CD8-positive, alpha-beta T cell (primary cell): ENCODE measurements at regions of chr11 and their contacts with region 1.

Region 1: DNA sequence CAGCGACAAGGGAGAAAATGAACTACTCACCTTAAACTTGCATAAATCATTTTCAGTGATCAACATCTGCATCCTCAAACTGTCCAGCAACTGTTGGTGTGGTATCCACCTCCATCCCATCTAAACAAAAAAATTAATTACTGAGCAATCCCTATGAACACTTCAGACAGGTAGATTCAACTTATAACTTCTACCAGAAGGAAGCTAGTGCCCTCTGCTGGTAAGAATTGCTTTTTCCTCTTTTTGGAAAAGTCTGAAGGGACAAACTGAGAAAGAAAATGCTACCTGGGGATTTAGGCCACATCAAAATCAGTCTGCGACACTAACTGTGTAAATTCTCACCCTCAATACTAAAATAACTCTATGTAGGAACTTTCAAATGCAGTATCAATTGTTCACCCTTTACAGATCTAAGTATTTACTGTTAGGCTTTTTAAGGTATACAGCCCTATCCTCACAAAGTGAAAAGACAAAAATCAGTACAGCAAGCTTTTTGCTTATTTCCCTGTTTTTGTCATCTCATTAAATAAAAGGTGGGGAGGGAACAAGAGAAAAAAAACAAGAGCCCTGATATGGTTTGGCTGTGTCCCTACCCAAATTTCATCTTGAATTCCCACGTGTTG is 17.9 kb downstream of the CLNS1A start:
- DNase-seq: peak in 3 of 9 experiments; percentile 34 to 66 (median 54)
- ATAC-seq: no peak
- H3K4me3 ChIP-seq: no peak overlapping the region
- H3K4me3 Mint-ChIP-seq: no peak overlapping the region
- H3K27ac ChIP-seq: no peak overlapping the region
- H3K27ac Mint-ChIP-seq: no peak overlapping the region
- H3K4me1 ChIP-seq: no peaks in the 10 kb centered on the region
- H3K4me1 Mint-ChIP-seq: no peaks in the 10 kb centered on the region
- H3K27me3 ChIP-seq: no peaks in the 10 kb centered on the region
- H3K27me3 Mint-ChIP-seq: no peaks in the 10 kb centered on the region
- CTCF ChIP-seq: peak; percentile 77

Region 2: GRCh38 chr11:77609234-77609633 is 10.5 kb before region 1 on chr11:
- CTCF ChIA-PET with region 1: interaction called, 13 read pairs
- POLR2A ChIA-PET with region 1: no interaction called
- intact Hi-C with region 1: no loop called
- DNase-seq: no peak
- ATAC-seq: no peak
- H3K4me3 ChIP-seq: no peak overlapping the region
- H3K4me3 Mint-ChIP-seq: no peak overlapping the region
- H3K27ac ChIP-seq: no peak overlapping the region
- H3K27ac Mint-ChIP-seq: no peak overlapping the region
- H3K4me1 ChIP-seq: no peaks in the 10 kb centered on the region
- H3K4me1 Mint-ChIP-seq: no peaks in the 10 kb centered on the region
- H3K27me3 ChIP-seq: no peaks in the 10 kb centered on the region
- H3K27me3 Mint-ChIP-seq: no peaks in the 10 kb centered on the region
- CTCF ChIP-seq: no peak

Region 3: DNA sequence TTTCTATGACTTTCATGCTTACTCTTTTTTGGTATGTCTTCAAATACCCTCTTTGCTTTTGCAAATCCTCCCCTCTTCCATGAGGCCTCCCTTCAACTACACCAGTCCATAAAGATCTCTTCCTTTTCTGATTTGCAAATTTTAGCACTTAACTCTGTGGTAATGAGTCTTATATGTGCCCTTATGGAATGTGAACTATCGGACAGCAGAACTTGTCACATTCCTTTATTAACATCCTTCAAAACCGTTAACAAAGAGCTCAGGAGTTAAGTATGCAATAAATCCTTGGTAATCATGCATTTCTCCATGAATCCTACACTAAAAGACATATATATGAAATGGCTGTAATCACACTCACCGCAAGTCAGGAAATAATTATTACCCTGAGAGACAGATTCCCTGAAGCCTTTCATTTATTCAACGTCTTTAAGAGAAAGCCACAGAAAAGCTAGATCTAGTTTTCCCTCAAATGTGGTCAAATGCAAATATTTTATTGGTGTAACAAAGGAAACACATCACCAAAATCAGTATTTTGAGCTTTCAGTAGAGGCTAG is 10.5 kb after region 1 on chr11:
- CTCF ChIA-PET with region 1: interaction called, 11 read pairs
- POLR2A ChIA-PET with region 1: no interaction called
- intact Hi-C with region 1: no loop called
- DNase-seq: no peak
- ATAC-seq: no peak
- H3K4me3 ChIP-seq: no peak overlapping the region
- H3K4me3 Mint-ChIP-seq: no peak overlapping the region
- H3K27ac ChIP-seq: no peak overlapping the region
- H3K27ac Mint-ChIP-seq: no peak overlapping the region
- H3K4me1 ChIP-seq: peaks cover 18% of the 10 kb centered on the region
- H3K4me1 Mint-ChIP-seq: peaks cover 35% of the 10 kb centered on the region
- H3K27me3 ChIP-seq: no peaks in the 10 kb centered on the region
- H3K27me3 Mint-ChIP-seq: no peaks in the 10 kb centered on the region
- CTCF ChIP-seq: no peak

Region 4: DNA sequence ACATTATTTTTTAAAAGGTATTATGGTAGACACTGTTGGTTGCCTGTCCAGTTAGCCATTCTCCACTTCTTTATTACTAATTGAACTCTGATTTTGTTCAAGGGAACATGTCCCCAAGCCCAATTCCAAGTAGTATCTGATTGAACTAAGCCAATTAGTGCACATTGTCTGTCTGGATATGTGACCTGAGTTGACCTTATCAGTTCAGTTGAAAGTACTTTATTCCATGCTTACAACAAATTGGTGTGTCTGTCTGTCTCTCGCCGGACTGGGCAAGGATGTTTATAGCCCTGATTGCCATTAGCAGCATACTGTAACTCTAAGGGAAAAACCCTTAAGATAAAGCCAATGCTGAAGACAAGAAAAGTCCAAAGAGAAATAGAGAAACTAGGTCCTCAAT is 289.1 kb after region 1 on chr11:
- CTCF ChIA-PET with region 1: no interaction called
- POLR2A ChIA-PET with region 1: no interaction called
- intact Hi-C with region 1: no loop called
- DNase-seq: no peak
- ATAC-seq: no peak
- H3K4me3 ChIP-seq: no peak overlapping the region
- H3K4me3 Mint-ChIP-seq: no peak overlapping the region
- H3K27ac ChIP-seq: no peak overlapping the region
- H3K27ac Mint-ChIP-seq: no peak overlapping the region
- H3K4me1 ChIP-seq: no peaks in the 10 kb centered on the region
- H3K4me1 Mint-ChIP-seq: no peaks in the 10 kb centered on the region
- H3K27me3 ChIP-seq: no peaks in the 10 kb centered on the region
- H3K27me3 Mint-ChIP-seq: no peaks in the 10 kb centered on the region
- CTCF ChIP-seq: no peak